ENCODE measurements at regions of chr14 and their contacts with region 1.

Region 1: GRCh38 chr14:105480952-105481801 is 5.5 kb upstream of the CRIP1 start:
- DNase-seq: peak; percentile 90
- ATAC-seq: peak; percentile 44
- H3K4me3 ChIP-seq: peak overlapping the region; percentile 71
- H3K27ac ChIP-seq: peak overlapping the region; percentile 100
- H3K4me1 ChIP-seq: peaks cover 47% of the 10 kb centered on the region
- H3K27me3 ChIP-seq: no peaks in the 10 kb centered on the region
- CTCF ChIP-seq: peak; percentile 95

Region 2: GRCh38 chr14:105392131-105393090 is 88.8 kb before region 1 on chr14:
- CTCF ChIA-PET with region 1: interaction called, 10 read pairs
- POLR2A ChIA-PET with region 1: no interaction called
- intact Hi-C with region 1: no loop called
- DNase-seq: no peak
- ATAC-seq: no peak
- H3K4me3 ChIP-seq: no peak overlapping the region
- H3K27ac ChIP-seq: no peak overlapping the region
- H3K4me1 ChIP-seq: no peaks in the 10 kb centered on the region
- H3K27me3 ChIP-seq: no peaks in the 10 kb centered on the region
- CTCF ChIP-seq: no peak

Measured in PC-3 (cell line).